Activated naive CD4-positive, alpha-beta T cell treated with anti-CD3 and anti-CD28 coated beads, Interleukin-2, amount 10 ng/mL, durations not matched to agents 7 days and 5 days (primary cell): ENCODE measurements at regions of chr1 and their contacts with region 1.

Region 1: DNA sequence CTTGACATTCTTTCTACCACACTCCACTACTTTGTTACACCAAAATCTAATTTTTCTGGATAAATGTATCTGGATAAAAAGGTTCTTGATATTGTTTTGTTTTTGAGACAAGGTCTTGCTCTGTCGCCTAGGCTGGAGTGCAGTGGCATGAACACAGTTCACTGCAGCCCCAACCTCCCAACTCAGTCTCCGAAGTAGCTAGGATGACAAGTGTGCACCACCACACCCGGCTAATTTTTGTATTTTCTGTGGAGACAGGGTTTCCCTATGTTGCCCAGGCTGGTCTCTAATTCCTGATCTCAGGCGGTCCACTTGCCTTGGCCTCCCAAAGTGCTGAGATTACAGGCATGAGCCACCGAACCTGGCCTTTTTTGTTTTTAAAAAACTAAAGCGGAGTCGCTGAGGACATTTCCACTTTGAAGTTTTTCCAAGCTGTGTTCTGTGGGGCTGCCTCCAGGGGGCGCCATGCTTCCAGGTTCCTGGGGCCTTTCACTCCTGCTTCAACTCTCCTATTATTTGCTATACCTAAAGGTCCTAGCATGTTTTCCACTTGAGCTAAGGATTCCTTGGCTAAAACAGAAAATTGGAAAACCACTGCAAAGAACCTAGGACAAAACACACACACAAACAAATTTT is 14.1 kb upstream of the NCMAP start:
- DNase-seq: peak; percentile 47
- H3K4me3 Mint-ChIP-seq: no peak overlapping the region
- H3K27ac Mint-ChIP-seq: peak overlapping the region; percentile 77
- H3K4me1 Mint-ChIP-seq: peaks cover 62% of the 10 kb centered on the region
- H3K27me3 Mint-ChIP-seq: peaks cover 4% of the 10 kb centered on the region

Region 2: DNA sequence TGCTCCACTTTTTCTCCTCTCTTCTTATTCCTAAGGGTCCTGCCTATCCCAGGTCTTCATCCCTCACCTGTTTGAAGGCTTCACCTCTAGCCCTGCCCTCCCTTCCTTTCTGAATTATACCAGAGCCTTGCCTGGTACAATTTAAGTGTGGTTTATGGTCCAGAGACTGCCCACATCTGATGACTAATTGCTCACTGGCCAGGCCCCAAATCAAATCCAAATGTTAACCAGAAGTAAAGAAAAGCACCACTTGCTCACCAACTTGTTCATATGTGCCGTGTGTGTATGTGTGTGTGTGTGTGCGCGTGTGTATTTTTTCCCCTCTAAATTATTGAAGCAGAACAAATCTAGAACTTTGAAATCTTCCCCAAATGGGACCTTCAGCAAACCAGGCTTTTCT is 456.3 kb before region 1 on chr1:
- CTCF ChIA-PET with region 1: no interaction called
- DNase-seq: no peak
- H3K4me3 Mint-ChIP-seq: no peak overlapping the region
- H3K27ac Mint-ChIP-seq: no peak overlapping the region
- H3K4me1 Mint-ChIP-seq: no peaks in the 10 kb centered on the region
- H3K27me3 Mint-ChIP-seq: peaks cover 35% of the 10 kb centered on the region

Region 3: DNA sequence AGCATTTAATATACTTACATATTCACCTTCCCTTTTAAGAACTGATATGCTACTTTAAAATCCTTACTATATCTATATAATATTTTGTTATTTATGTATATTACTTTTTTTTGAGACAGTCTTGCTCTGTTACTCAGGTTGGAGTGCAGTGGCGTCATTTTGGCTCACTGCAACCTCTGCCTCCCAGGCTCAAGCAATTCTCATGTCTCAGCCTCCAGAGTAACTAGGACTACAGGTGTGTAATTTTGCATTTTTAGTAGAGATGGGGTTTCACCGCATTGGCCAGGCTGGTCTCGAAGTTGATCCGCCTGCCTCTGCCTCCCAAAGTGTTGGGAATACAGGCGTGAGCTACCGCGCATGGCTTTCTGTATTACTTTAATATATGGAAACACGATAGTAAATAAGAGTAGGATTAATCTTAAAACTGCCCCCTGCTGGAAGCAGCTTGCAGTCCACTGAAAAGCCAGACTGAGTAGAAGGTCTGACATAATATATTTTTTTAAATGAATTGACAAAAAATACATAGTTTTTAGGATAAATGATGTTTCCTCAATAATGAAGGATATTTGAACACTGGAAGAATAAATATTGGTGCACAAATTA is 14.8 kb before region 1 on chr1:
- CTCF ChIA-PET with region 1: interaction called, 14 read pairs
- DNase-seq: peak; percentile 66
- H3K4me3 Mint-ChIP-seq: no peak overlapping the region
- H3K27ac Mint-ChIP-seq: no peak overlapping the region
- H3K4me1 Mint-ChIP-seq: peaks cover 51% of the 10 kb centered on the region
- H3K27me3 Mint-ChIP-seq: no peaks in the 10 kb centered on the region

Region 4: DNA sequence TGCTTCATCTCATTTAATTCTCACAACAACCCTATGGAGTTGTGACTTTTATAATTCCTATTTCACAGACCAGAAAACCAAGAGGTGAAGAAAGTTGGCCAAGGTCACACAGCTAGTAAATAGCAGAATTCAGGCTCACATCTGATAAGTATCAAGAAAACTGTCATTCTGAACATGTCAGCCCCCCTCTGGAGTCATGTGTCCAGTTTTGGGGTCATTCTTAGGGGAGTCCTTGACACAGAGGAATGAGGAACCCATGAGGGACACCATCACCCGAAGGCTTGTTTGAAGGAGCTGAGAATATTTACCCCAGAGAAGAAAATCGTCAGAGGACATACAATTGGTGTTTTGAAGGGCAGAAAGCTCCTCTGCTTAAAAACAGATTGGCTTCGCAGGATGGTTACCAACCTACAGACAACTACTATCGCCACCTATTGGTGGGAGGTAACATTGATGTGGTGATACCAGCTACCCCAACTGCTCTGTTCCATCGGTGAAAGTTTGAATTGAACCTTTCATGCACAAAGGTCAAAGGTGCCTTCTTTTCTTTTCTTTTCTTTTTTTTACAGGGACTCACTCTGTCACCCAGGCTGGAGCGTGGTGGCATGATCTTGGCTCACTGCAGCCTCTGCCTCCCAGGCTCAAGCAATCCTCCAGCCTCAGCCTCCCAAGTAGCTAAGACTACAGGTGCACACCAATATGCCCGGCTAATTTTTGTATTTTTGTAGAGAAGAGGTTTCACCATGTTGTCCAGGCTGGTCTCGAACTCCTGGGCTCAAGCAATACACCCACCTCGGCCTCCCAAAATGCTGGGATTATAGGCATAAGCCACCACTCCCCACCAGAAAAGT is 45.4 kb after region 1 on chr1:
- CTCF ChIA-PET with region 1: interaction called, 39 read pairs
- DNase-seq: peak; percentile 64
- H3K4me3 Mint-ChIP-seq: no peak overlapping the region
- H3K27ac Mint-ChIP-seq: no peak overlapping the region
- H3K4me1 Mint-ChIP-seq: peaks cover 9% of the 10 kb centered on the region
- H3K27me3 Mint-ChIP-seq: peaks cover 56% of the 10 kb centered on the region

Region 5: GRCh38 chr1:24635195-24635843 is 93.5 kb after region 1 on chr1:
- CTCF ChIA-PET with region 1: interaction called, 28 read pairs
- DNase-seq: no peak
- H3K4me3 Mint-ChIP-seq: no peak overlapping the region
- H3K27ac Mint-ChIP-seq: no peak overlapping the region
- H3K4me1 Mint-ChIP-seq: peaks cover 8% of the 10 kb centered on the region
- H3K27me3 Mint-ChIP-seq: peaks cover 27% of the 10 kb centered on the region